ENCODE measurements at regions of chr10 and their contacts with region 1.

Region 1: DNA sequence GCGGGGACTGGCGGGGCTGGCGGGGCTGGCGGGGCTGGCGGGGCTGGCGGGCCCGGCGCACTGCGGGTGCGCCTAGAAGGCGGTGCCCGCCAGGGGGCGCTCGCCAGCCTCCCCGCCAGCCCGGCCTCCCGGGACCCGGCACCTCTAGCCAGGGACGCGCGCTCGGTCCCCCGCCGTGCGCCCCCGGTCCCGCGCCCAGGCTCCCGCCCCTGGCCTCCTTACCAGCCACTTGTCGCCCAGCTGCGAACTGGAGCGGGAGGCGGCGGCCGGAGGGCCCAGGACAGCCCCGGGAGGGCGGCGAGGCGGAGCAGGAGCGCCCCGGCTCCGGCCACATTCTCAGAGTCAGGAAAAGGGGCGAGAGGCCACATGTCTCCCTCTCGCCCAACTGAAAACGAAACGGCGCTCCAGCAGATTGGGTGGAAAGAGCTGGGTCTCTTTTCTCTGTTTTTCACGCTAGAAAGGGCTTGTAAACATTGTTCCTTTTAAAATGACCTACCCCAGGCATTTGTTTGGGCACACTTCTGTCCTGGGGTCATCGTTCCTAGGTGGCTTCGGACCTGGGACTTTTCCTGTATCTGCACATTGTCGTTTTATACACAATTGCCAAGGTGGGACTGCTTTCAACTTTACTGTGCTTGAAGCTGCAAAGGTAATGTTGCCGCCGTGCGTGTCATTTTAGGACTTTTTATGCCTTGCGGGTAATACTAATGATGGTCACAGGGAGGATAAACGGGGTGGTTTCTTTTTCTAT is 378 bp upstream of the PRKCQ start:
- DNase-seq: peak; percentile 89
- H3K4me3 Mint-ChIP-seq: peak overlapping the region; percentile 90
- H3K27ac Mint-ChIP-seq: peak overlapping the region; percentile 96
- H3K4me1 Mint-ChIP-seq: peaks cover 55% of the 10 kb centered on the region
- H3K27me3 Mint-ChIP-seq: no peaks in the 10 kb centered on the region

Region 2: GRCh38 chr10:6202684-6203330 is 377.6 kb before region 1 on chr10 and contains the start of gene PFKFB3:
- CTCF ChIA-PET with region 1: no interaction called
- POLR2A ChIA-PET with region 1: no interaction called
- intact Hi-C with region 1: loop called (anchors 5 kb)
- DNase-seq: peak; percentile 96
- H3K4me3 Mint-ChIP-seq: peak within 1 kb of the TSS; percentile 90
- H3K27ac Mint-ChIP-seq: peak within 1 kb of the TSS; percentile 91
- H3K4me1 Mint-ChIP-seq: peaks cover 32% of the 10 kb centered on the region
- H3K27me3 Mint-ChIP-seq: no peaks in the 10 kb centered on the region
- total RNA-seq, gene PFKFB3: 70.6 to 76.4 TPM

Region 3: GRCh38 chr10:6473901-6474370 is 106.5 kb before region 1 on chr10:
- CTCF ChIA-PET with region 1: interaction called, 19 read pairs
- POLR2A ChIA-PET with region 1: interaction called, 12 read pairs
- intact Hi-C with region 1: loop called (anchors 1 kb)
- DNase-seq: peak; percentile 54
- H3K4me3 Mint-ChIP-seq: peak overlapping the region; percentile 73
- H3K27ac Mint-ChIP-seq: peak overlapping the region; percentile 93
- H3K4me1 Mint-ChIP-seq: peaks cover 48% of the 10 kb centered on the region
- H3K27me3 Mint-ChIP-seq: no peaks in the 10 kb centered on the region

Region 4: DNA sequence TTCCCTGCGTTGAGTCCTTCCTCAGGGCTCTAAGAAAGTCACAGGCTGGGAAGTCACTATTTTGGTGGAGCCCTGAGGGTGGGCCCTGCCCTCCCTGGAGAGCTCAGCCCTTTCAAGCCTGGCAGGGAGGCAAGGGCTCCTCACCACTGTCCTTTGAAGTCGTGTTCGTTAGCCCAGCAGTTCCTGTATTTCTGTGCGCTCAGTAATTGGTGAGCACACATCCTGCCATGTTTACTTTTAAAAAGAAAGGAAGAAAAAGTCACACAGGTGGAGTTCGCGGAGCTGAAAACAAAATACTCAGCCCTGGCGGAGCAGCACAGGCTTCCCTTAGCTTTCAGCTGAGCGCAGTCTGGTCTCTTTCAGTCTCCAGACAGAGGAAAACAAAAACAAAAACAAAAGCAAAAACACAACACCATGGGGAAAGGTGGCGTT is 37.4 kb before region 1 on chr10:
- CTCF ChIA-PET with region 1: interaction called, 7 read pairs
- POLR2A ChIA-PET with region 1: interaction called, 6 read pairs
- intact Hi-C with region 1: loop called (anchors 1 kb)
- DNase-seq: peak; percentile 65
- H3K4me3 Mint-ChIP-seq: peak overlapping the region; percentile 90
- H3K27ac Mint-ChIP-seq: peak overlapping the region; percentile 99
- H3K4me1 Mint-ChIP-seq: peaks cover 73% of the 10 kb centered on the region
- H3K27me3 Mint-ChIP-seq: no peaks in the 10 kb centered on the region

Region 5: DNA sequence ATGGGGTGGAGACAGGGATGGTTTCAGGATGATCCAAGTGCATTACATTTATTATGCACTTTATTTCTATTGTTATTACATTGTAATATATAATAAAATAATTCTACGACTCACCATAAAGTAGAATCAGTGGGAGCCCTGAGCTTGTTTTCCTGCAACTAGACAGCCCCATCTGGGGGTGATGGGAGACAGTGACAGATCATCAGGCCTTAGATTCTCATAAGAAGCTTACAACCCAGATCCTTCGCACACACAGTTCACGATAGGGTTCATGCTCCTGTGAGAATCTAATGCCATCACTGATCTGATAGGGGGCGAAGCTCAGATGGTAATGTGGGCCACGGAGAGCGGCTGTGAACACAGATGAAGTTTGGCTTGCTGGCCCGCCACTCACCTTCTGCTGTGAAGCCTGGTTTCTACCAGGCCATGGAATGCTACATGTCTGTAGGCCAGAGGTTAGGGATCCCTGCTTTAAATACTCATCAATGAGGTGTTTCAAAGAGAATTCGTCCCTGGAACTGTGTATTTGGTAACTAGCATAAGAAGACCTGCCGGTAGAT is 20.9 kb after region 1 on chr10:
- CTCF ChIA-PET with region 1: interaction called, 31 read pairs
- POLR2A ChIA-PET with region 1: interaction called, 6 read pairs
- intact Hi-C with region 1: loop called (anchors 1 kb)
- DNase-seq: peak; percentile 48
- H3K4me3 Mint-ChIP-seq: no peak overlapping the region
- H3K27ac Mint-ChIP-seq: peak overlapping the region; percentile 89
- H3K4me1 Mint-ChIP-seq: peaks cover 62% of the 10 kb centered on the region
- H3K27me3 Mint-ChIP-seq: no peaks in the 10 kb centered on the region

Region 6: GRCh38 chr10:6647811-6648526 is 67.5 kb after region 1 on chr10:
- CTCF ChIA-PET with region 1: interaction called, 39 read pairs
- POLR2A ChIA-PET with region 1: interaction called, 24 read pairs
- intact Hi-C with region 1: loop called (anchors 1 kb)
- DNase-seq: peak; percentile 81
- H3K4me3 Mint-ChIP-seq: no peak overlapping the region
- H3K27ac Mint-ChIP-seq: peak overlapping the region; percentile 56
- H3K4me1 Mint-ChIP-seq: peaks cover 61% of the 10 kb centered on the region
- H3K27me3 Mint-ChIP-seq: no peaks in the 10 kb centered on the region

Measured in activated CD4-positive, alpha-beta memory T cell treated with anti-CD3 and anti-CD28 coated beads for 36 hours (primary cell).